A673 (cell line): ENCODE measurements at regions of chr21 and their contacts with region 1.

Region 1: GRCh38 chr21:34345091-34345871 is 18.5 kb upstream of the KCNE2 start:
- DNase-seq: no peak
- H3K4me3 ChIP-seq: no peak overlapping the region
- H3K27ac ChIP-seq: no peak overlapping the region
- H3K4me1 ChIP-seq: no peaks in the 10 kb centered on the region
- H3K27me3 ChIP-seq: no peaks in the 10 kb centered on the region
- CTCF ChIP-seq: no peak

Region 2: GRCh38 chr21:33817663-33818451 is 527.4 kb before region 1 on chr21:
- CTCF ChIA-PET with region 1: no interaction called
- POLR2A ChIA-PET with region 1: no interaction called
- intact Hi-C with region 1: no loop called
- DNase-seq: peak; percentile 40
- H3K4me3 ChIP-seq: no peak overlapping the region
- H3K27ac ChIP-seq: no peak overlapping the region
- H3K4me1 ChIP-seq: peaks cover 8% of the 10 kb centered on the region
- H3K27me3 ChIP-seq: no peaks in the 10 kb centered on the region
- CTCF ChIP-seq: no peak

Region 3: DNA sequence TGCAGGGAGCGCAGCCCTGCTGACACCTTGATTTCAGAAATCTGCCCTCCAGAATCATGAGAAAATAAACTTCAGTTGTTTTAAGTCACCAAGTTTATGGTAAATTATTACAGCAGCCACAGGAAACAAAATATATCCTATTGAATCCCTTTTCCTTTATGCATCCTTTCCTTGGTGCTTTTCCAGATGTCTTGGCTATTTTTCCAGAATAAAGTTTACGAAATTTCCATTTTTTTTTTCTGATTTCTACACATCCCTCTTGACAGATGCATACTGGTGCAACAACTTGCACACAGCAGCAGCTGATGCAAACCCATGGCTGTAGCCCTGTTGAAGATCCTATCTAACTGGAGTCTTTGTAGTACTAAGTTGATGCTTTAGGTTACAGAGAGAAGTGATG is 92.5 kb before region 1 on chr21:
- CTCF ChIA-PET with region 1: no interaction called
- POLR2A ChIA-PET with region 1: no interaction called
- intact Hi-C with region 1: loop called (anchors 5 kb)
- DNase-seq: no peak
- H3K4me3 ChIP-seq: no peak overlapping the region
- H3K27ac ChIP-seq: no peak overlapping the region
- H3K4me1 ChIP-seq: no peaks in the 10 kb centered on the region
- H3K27me3 ChIP-seq: no peaks in the 10 kb centered on the region
- CTCF ChIP-seq: no peak

Region 4: DNA sequence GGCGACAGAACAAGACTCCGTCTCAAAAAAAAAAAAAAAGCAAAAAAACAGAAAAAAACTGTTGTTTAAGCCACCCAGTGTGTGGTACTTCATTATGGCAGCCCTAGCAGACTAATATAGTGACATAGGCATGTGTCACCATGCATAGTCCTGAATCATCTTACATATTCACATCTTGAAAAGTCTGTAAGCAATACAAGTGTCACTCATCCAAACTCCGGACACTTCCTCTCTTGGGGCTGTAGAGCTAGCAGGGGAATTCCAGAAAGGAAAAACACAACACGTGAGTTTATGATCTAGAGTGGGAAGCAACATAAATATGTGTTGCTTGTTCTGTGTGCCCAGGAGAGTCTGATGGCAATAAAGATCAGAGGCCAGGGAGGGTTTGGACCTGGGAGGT is 63.1 kb before region 1 on chr21:
- CTCF ChIA-PET with region 1: no interaction called
- POLR2A ChIA-PET with region 1: no interaction called
- intact Hi-C with region 1: no loop called
- DNase-seq: no peak
- H3K4me3 ChIP-seq: no peak overlapping the region
- H3K27ac ChIP-seq: no peak overlapping the region
- H3K4me1 ChIP-seq: no peaks in the 10 kb centered on the region
- H3K27me3 ChIP-seq: no peaks in the 10 kb centered on the region
- CTCF ChIP-seq: no peak

Region 5: GRCh38 chr21:35026617-35027562 is 681.6 kb after region 1 on chr21:
- CTCF ChIA-PET with region 1: no interaction called
- POLR2A ChIA-PET with region 1: no interaction called
- intact Hi-C with region 1: no loop called
- DNase-seq: no peak
- H3K4me3 ChIP-seq: no peak overlapping the region
- H3K27ac ChIP-seq: no peak overlapping the region
- H3K4me1 ChIP-seq: no peaks in the 10 kb centered on the region
- H3K27me3 ChIP-seq: peaks cover 3% of the 10 kb centered on the region
- CTCF ChIP-seq: no peak